Heart right ventricle (tissue), 16 donors: ENCODE measurements at regions of chr5 and their contacts with region 1.

Region 1: DNA sequence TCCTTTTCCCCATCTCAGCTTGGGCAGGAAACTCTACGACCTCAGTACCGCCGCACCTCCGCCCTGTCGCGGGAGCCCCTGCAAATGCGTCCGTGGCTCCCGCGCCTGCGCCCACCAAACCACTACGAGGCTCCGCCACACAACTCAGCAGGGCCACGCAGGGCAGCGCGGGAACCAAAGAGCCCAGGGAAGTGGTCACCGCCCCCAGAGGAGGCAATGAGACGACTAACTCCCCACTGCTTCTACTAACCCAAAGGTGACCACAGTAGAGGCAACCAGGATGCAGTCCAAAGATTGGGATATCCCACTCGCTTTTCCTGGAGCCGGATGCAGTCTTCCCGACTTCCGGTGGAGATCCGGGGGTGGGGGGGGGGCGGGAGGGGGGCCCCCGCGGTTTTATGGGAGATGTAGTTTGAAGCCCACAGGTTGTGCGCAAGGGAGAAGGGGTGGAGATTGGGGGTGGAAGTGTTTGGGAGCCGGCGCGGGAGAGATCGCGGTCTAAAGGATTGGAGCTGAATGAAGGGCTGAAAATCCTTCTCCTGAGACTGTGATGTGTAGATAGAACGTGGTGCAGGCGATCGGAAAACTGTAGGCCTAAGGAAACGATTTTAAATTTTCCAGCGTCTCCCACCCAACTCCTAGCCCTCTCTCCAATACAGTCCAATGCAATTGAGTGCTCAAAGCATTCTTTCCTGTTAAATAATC is at the start of gene NUDT12:
- DNase-seq: peak; percentile 67 to 69
- ATAC-seq: peak; percentile 91 to 97 (median 95)
- H3K4me3 ChIP-seq: peak within 1 kb of the TSS; percentile 47 to 97 (median 80)
- H3K27ac ChIP-seq: peak within 1 kb of the TSS; percentile 78 to 95 (median 90)
- H3K4me1 ChIP-seq: peaks cover 0 to 21% (median 7%) of the 10 kb centered on the region in 9 donors
- H3K27me3 ChIP-seq: peaks cover 0 to 5% (median 0%) of the 10 kb centered on the region in 7 donors
- CTCF ChIP-seq: no peak
- total RNA-seq, gene NUDT12: 9.8 to 17.0 (median 12.4) TPM

Region 2: DNA sequence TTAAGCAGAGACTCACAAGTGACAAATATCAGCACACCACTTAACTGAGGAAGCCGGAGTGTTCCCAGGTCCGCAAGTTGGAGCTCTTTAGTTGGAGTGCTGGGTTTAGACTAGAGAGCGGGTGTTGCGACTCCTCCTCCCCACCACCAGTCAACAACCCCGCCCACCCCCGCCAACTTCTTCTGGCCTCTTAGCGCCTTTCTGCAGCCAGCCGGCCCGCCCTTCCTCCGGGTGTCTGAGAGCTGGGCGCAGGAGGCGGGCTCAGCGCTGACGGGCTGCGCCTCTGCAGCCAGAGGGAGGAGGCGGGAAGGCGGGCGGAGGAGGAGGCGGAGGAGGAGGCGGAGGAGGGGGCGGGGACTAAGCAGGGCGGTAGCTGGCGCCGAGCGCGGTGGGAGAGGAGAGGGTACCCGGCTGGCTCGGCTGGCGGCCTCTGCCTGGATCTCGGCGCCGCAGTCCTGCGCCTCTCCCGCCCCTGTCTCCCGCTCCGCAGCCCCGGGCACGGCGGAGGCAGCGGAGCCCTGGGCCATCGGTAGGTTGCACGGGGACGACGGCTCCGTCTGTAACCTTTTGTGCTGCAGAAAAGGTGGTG is 304.1 kb before region 1 on chr5 and contains the start of gene MACIR:
- intact Hi-C with region 1: loop called in 1 of 10 experiments (anchors 10 kb)
- DNase-seq: peak; percentile 97 to 98
- ATAC-seq: peak; percentile 96 to 99 (median 98)
- H3K4me3 ChIP-seq: peak within 1 kb of the TSS; percentile 73 to 99 (median 90)
- H3K27ac ChIP-seq: peak within 1 kb of the TSS; percentile 68 to 93 (median 86)
- H3K4me1 ChIP-seq: peaks cover 0 to 40% (median 30%) of the 10 kb centered on the region in 9 donors
- H3K27me3 ChIP-seq: no peaks in the 10 kb centered on the region
- CTCF ChIP-seq: peak in 5 of 9 donors; percentile 4 to 33 (median 21)
- total RNA-seq, gene MACIR: 2.3 to 5.1 (median 3.8) TPM